ENCODE measurements at regions of chr2 and their contacts with region 1.

Region 1: DNA sequence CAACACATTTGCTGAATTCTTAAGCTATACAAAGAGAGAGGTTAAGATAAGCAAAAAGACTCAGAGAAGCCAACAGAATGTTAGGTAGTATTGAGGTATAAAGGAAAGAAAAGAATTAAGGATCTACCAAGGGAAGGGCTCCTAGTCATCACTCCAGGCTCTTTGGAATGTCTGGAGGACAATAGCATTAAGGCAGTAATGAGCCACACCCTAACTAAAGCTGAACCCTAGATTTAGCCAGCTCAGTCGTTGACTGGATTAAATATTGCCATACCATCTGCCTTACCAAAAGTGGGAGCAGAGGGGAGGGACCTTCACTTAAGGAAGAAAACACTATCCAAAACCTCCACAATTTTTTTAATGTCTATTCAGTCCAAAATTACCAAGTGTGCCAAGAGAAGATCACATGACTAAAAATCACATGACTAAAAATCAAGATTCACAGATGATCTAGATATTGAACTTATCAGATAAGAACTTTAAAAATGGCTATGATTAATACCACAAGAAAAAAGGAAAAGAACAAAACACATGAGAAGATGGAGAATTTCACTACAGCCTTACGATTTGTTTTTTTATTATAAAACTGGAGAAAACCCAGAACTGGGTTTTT is 59.7 kb downstream of the EXOC6B start:
- DNase-seq: no peak
- ATAC-seq: no peak

Region 2: GRCh38 chr2:72057308-72057707 is 708.8 kb before region 1 on chr2:
- intact Hi-C with region 1: no loop called
- DNase-seq: no peak
- ATAC-seq: no peak

Region 3: DNA sequence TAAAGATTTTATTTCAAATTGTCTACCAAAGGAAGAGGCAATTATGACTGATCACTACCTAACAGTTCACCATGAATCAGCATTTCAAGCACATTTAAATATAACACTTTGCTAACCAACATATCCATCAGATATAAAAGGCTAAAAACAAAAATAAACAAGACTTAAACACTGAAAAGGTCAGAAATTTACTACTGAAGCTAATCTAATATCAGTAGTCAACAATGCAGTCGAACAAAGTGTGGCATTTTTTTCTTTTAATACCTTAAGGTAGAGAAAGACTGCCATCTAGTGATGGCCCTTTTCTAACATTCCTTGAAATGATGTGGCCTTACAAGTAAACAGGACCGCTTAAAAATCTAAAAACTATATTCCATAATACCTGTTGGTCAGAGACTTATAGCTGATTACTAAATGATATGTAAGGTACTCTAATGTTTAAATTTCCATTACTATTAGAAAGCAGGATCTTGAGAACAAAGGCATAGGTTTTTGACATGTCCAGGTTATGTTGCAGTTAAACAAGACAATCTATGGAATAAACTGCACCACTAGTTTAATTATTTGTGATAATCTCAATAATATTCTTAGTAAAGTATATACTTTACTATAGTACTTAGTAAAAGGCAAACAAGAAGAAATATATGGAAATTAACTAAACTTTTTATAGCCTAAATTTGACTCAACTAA is 20.3 kb before region 1 on chr2:
- intact Hi-C with region 1: no loop called
- DNase-seq: no peak
- ATAC-seq: no peak

Region 4: GRCh38 chr2:72862239-72862988 is 96.3 kb after region 1 on chr2:
- intact Hi-C with region 1: loop called (anchors 5 kb)
- DNase-seq: peak; percentile 93
- ATAC-seq: peak; percentile 98

Measured in sciatic nerve (tissue), 2 donors.